Endothelial cell of umbilical vein (primary cell): ENCODE measurements at regions of chr2 and their contacts with region 1.

Region 1: GRCh38 chr2:109128048-109128465 is 948 bp upstream of the SH3RF3 start:
- DNase-seq: peak; percentile 89
- H3K4me3 ChIP-seq: peak overlapping the region; percentile 62 to 73 (median 69)
- H3K27ac ChIP-seq: peak overlapping the region; percentile 75
- H3K4me1 ChIP-seq: peaks cover 12% of the 10 kb centered on the region
- H3K27me3 ChIP-seq: no peaks in the 10 kb centered on the region
- CTCF ChIP-seq: peak; percentile 89 to 96
- POLR2A ChIP-seq: no peak

Region 2: DNA sequence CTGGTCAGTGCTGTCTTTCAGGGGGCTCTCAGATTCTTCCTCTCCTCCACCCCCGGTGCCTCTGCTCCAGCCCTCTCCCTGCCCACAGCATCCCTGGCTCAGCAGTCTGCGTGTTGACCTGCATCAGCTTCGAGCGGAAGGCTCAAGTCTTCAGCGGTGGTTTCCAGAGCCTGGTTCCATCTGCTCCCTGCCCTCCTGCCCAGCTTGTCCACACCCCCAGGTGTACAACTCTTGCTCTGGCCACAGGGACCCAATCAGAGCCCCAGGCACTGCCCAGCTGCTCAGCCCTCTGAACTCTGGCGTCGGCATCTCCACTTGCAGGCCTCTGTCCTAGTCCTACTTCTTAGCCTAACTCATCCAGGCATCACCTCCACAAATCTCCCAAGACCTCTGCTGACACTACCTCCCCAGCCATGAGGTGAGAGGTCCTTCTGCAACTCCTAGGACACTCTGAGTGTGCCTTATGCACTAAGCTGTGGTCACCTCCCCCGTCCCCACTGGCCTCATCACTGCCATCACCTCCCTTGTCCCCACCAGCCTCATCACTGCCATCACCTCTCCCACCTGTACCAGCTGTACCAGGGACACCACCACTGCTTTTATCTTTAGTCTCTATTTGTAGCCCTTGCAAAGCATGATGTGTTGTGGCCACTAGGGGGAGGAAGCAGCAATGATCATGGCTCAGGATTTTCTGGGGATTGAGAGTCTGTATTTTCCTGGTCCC is 200.0 kb before region 1 on chr2:
- CTCF ChIA-PET with region 1: interaction called, 10 read pairs
- POLR2A ChIA-PET with region 1: no interaction called
- dilution Hi-C with region 1: no loop called
- intact Hi-C with region 1: no loop called
- DNase-seq: peak; percentile 51
- H3K4me3 ChIP-seq: no peak overlapping the region
- H3K27ac ChIP-seq: no peak overlapping the region
- H3K4me1 ChIP-seq: no peaks in the 10 kb centered on the region
- H3K27me3 ChIP-seq: no peaks in the 10 kb centered on the region
- CTCF ChIP-seq: peak; percentile 71 to 73
- POLR2A ChIP-seq: no peak

Region 3: GRCh38 chr2:109173311-109174171 is 45.5 kb after region 1 on chr2:
- CTCF ChIA-PET with region 1: interaction called, 19 read pairs
- POLR2A ChIA-PET with region 1: no interaction called
- dilution Hi-C with region 1: no loop called
- intact Hi-C with region 1: loop called (anchors 1 kb)
- DNase-seq: peak; percentile 82
- H3K4me3 ChIP-seq: no peak overlapping the region
- H3K27ac ChIP-seq: peak overlapping the region; percentile 90
- H3K4me1 ChIP-seq: peaks cover 55% of the 10 kb centered on the region
- H3K27me3 ChIP-seq: no peaks in the 10 kb centered on the region
- CTCF ChIP-seq: no peak
- POLR2A ChIP-seq: peak; percentile 48

Region 4: GRCh38 chr2:109238580-109238979 is 110.5 kb after region 1 on chr2:
- CTCF ChIA-PET with region 1: interaction called, 4 read pairs
- POLR2A ChIA-PET with region 1: no interaction called
- dilution Hi-C with region 1: no loop called
- intact Hi-C with region 1: loop called (anchors 2 kb)
- DNase-seq: peak; percentile 89
- H3K4me3 ChIP-seq: peak overlapping the region in 1 of 3 experiments; percentile 17
- H3K27ac ChIP-seq: peak overlapping the region; percentile 93
- H3K4me1 ChIP-seq: peaks cover 51% of the 10 kb centered on the region
- H3K27me3 ChIP-seq: no peaks in the 10 kb centered on the region
- CTCF ChIP-seq: no peak
- POLR2A ChIP-seq: peak; percentile 38

Region 5: DNA sequence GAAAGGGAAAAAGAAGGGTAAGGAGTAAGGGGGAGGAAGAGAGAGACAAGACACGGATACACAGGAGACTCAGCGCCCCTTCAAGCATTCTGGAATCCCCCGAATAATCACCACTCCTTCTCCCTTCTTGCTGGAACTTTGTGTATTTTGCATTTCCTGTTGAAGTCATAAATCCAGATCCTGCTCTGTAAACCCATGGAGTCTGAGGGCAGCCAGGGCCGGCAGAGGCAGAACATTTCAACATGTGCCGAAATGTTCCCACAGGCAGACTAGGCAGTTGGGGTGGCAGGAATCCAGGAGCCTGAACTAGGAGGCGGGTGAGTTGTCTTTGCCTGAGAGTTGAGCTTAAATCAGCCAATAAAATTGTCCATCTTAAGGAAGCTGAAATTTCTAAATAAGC is 194.1 kb after region 1 on chr2:
- CTCF ChIA-PET with region 1: no interaction called
- POLR2A ChIA-PET with region 1: no interaction called
- dilution Hi-C with region 1: no loop called
- intact Hi-C with region 1: loop called (anchors 1 kb)
- DNase-seq: peak; percentile 87
- H3K4me3 ChIP-seq: no peak overlapping the region
- H3K27ac ChIP-seq: peak overlapping the region; percentile 55
- H3K4me1 ChIP-seq: peaks cover 38% of the 10 kb centered on the region
- H3K27me3 ChIP-seq: no peaks in the 10 kb centered on the region
- CTCF ChIP-seq: no peak
- POLR2A ChIP-seq: no peak

Region 6: DNA sequence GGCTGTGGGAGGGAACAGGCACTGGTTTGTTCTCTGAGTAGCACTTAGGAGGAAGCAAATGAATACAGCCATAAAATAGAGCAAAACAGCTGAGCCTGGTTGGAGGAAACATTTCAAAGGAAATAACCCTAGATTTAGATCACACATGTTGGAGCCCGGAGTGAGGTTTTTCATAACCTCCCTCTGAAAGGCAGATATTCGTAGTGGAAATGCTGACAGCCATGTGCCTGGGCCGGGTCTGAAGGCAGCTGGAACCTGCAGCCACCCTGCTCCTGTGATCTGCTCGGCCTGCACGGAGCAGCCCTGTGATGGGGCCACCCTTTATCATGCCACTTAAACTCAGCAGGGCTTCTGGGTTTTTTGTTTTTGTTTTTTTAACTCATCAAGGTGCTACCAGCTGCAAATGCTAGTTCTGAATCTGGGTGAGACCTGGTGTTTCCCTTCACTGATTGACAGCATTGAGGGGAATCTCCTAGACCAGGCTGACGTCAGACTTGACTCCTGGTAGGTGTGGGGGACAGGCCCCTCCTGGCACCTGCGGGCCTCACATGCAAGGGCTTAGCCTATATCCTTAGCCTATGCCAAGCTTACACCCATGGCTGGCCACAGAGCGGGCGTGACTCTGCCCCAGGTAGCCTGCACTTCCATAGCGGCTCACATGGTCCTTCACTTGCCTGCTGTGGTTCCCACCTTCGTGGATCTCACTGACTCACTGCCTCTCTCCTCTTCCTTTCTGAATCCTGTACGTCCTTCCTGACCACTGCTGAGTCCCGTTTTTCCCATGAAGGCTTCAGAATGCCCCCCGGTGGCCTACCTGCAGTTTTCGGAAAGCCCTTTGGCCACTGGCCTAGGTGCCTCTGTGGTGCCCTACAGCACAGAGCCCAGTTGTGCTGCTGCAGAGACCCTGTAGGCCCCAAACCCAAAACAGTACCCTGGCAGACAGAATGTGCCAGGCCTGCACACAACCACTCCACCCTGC is 268.4 kb after region 1 on chr2:
- CTCF ChIA-PET with region 1: no interaction called
- POLR2A ChIA-PET with region 1: no interaction called
- dilution Hi-C with region 1: no loop called
- intact Hi-C with region 1: loop called (anchors 1 kb)
- DNase-seq: peak; percentile 33
- H3K4me3 ChIP-seq: no peak overlapping the region
- H3K27ac ChIP-seq: no peak overlapping the region
- H3K4me1 ChIP-seq: no peaks in the 10 kb centered on the region
- H3K27me3 ChIP-seq: no peaks in the 10 kb centered on the region
- CTCF ChIP-seq: no peak
- POLR2A ChIP-seq: no peak